CD4-positive, alpha-beta T cell (primary cell): ENCODE measurements at regions of chr1 and their contacts with region 1.

Region 1: DNA sequence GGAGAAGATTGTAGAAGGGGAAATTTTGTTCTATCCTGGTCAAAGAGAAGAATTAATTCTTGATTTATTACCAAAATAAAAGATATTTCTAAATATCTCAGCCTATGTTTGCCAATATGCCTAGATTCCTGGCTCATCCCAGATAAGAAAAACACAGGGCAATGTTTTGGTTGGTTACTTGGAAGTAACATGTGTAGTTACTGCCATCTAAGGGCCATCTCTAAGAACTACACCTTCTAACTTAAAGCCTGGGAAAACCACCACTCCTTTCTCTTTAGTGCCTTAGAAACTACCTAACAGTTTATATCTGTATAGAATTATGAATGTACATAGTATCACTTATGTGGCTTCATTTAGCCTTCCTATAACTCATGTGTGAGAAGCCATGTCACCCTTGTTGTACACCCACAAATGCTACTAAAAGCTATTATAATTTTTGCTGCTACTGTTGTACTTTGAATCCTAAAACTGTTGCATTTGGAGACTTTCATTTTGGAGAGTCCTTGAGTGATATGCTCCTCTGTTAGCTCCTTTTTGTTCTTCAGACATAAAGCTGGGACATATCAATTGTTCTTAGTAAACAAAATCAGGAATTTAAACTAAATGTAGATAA is 4.5 kb downstream of the AIM2 start:
- DNase-seq: peak in 3 of 14 experiments; percentile 67 to 72 (median 72)
- ATAC-seq: no peak
- H3K4me3 ChIP-seq: no peak overlapping the region
- H3K4me3 Mint-ChIP-seq: no peak overlapping the region
- H3K27ac ChIP-seq: no peak overlapping the region
- H3K27ac Mint-ChIP-seq: peak overlapping the region; percentile 0
- H3K4me1 ChIP-seq: peaks cover 27% of the 10 kb centered on the region
- H3K4me1 Mint-ChIP-seq: peaks cover 39% of the 10 kb centered on the region
- H3K27me3 ChIP-seq: no peaks in the 10 kb centered on the region
- H3K27me3 Mint-ChIP-seq: no peaks in the 10 kb centered on the region
- CTCF ChIP-seq: peak; percentile 88

Region 2: GRCh38 chr1:157992031-157992832 is 1079.8 kb before region 1 on chr1:
- CTCF ChIA-PET with region 1: no interaction called
- POLR2A ChIA-PET with region 1: no interaction called
- intact Hi-C with region 1: loop called (anchors 5 to 10 kb)
- DNase-seq: peak in 12 of 14 experiments; percentile 5 to 54 (median 16)
- ATAC-seq: peak; percentile 48
- H3K4me3 ChIP-seq: no peak overlapping the region
- H3K4me3 Mint-ChIP-seq: no peak overlapping the region
- H3K27ac ChIP-seq: no peak overlapping the region
- H3K27ac Mint-ChIP-seq: no peak overlapping the region
- H3K4me1 ChIP-seq: peaks cover 9% of the 10 kb centered on the region
- H3K4me1 Mint-ChIP-seq: no peaks in the 10 kb centered on the region
- H3K27me3 ChIP-seq: peaks cover 21 to 41% of the 10 kb centered on the region in 2 experiments
- H3K27me3 Mint-ChIP-seq: peaks cover 62% of the 10 kb centered on the region
- CTCF ChIP-seq: peak; percentile 65

Region 3: GRCh38 chr1:158203693-158204457 is 868.2 kb before region 1 on chr1:
- CTCF ChIA-PET with region 1: interaction called, 14 read pairs
- POLR2A ChIA-PET with region 1: interaction called, 3 read pairs
- intact Hi-C with region 1: loop called (anchors 1 kb)
- DNase-seq: peak in 4 of 14 experiments; percentile 22 to 71 (median 56)
- ATAC-seq: peak; percentile 54
- H3K4me3 ChIP-seq: no peak overlapping the region
- H3K4me3 Mint-ChIP-seq: no peak overlapping the region
- H3K27ac ChIP-seq: no peak overlapping the region
- H3K27ac Mint-ChIP-seq: no peak overlapping the region
- H3K4me1 ChIP-seq: peaks cover 4% of the 10 kb centered on the region
- H3K4me1 Mint-ChIP-seq: peaks cover 18% of the 10 kb centered on the region
- H3K27me3 ChIP-seq: peaks cover 2 to 6% of the 10 kb centered on the region in 2 experiments
- H3K27me3 Mint-ChIP-seq: peaks cover 17% of the 10 kb centered on the region
- CTCF ChIP-seq: peak; percentile 95

Region 4: GRCh38 chr1:158485455-158485854 is 586.6 kb before region 1 on chr1:
- CTCF ChIA-PET with region 1: no interaction called
- POLR2A ChIA-PET with region 1: no interaction called
- intact Hi-C with region 1: no loop called
- DNase-seq: no peak
- ATAC-seq: no peak
- H3K4me3 ChIP-seq: no peak overlapping the region
- H3K4me3 Mint-ChIP-seq: no peak overlapping the region
- H3K27ac ChIP-seq: no peak overlapping the region
- H3K27ac Mint-ChIP-seq: no peak overlapping the region
- H3K4me1 ChIP-seq: no peaks in the 10 kb centered on the region
- H3K4me1 Mint-ChIP-seq: no peaks in the 10 kb centered on the region
- H3K27me3 ChIP-seq: peaks cover 0 to 5% of the 10 kb centered on the region in 2 experiments
- H3K27me3 Mint-ChIP-seq: peaks cover 18% of the 10 kb centered on the region
- CTCF ChIP-seq: no peak

Region 5: DNA sequence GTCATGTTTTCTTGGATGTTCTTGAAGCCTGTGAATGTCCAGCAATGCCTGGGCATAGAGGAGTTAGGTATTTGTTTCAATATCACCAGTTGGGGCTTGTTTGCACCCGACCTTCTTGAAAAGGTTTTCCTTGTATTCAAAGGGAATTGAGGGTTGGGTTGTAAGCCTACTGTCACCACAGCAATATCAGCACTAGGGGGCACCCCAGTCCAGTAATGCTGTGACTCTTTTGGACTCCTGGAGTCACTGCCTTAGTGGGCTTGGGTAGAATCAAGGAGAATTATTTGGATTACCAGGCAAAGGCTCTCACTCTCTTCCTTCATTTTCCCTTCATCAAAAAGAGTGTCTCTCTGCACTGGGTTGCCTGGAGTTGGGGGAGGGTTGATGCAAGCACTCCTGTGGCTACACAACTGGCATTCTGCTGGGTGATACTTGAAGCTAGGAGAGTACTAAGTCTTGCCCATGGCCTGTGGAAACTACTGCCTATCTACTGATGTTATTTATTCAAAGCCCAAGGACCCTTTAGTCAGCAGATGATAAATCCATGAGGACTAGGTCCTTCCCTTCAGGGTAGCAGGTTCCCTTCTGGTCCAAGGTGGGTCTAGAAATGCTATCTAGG is 565.6 kb before region 1 on chr1:
- CTCF ChIA-PET with region 1: no interaction called
- POLR2A ChIA-PET with region 1: no interaction called
- intact Hi-C with region 1: loop called (anchors 5 kb)
- DNase-seq: peak; percentile 4 to 61 (median 10)
- ATAC-seq: no peak
- H3K4me3 ChIP-seq: no peak overlapping the region
- H3K4me3 Mint-ChIP-seq: no peak overlapping the region
- H3K27ac ChIP-seq: no peak overlapping the region
- H3K27ac Mint-ChIP-seq: no peak overlapping the region
- H3K4me1 ChIP-seq: no peaks in the 10 kb centered on the region
- H3K4me1 Mint-ChIP-seq: no peaks in the 10 kb centered on the region
- H3K27me3 ChIP-seq: peaks cover 4 to 5% of the 10 kb centered on the region in 2 experiments
- H3K27me3 Mint-ChIP-seq: peaks cover 18% of the 10 kb centered on the region
- CTCF ChIP-seq: peak; percentile 22

Region 6: DNA sequence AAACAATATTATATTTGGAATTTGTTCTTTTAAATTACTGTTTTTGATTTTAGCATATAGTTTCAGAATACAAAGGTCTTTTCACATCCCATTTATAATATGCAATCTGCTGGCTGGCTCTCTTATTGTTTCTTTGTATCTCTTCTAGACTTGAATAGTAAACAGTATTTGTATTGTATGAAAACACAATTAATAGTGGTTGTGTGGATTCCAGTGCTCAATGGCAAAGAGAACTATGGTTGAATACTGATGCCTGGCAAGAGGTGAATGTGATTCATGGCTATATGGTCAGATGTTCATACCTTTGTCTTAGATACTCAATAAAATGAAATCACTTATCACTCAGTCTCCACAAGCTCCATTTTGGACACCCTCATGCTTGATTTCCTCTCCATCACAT is 555.1 kb before region 1 on chr1:
- CTCF ChIA-PET with region 1: no interaction called
- POLR2A ChIA-PET with region 1: no interaction called
- intact Hi-C with region 1: no loop called
- DNase-seq: no peak
- ATAC-seq: no peak
- H3K4me3 ChIP-seq: no peak overlapping the region
- H3K4me3 Mint-ChIP-seq: no peak overlapping the region
- H3K27ac ChIP-seq: no peak overlapping the region
- H3K27ac Mint-ChIP-seq: no peak overlapping the region
- H3K4me1 ChIP-seq: no peaks in the 10 kb centered on the region
- H3K4me1 Mint-ChIP-seq: no peaks in the 10 kb centered on the region
- H3K27me3 ChIP-seq: peaks cover 0 to 5% of the 10 kb centered on the region in 2 experiments
- H3K27me3 Mint-ChIP-seq: peaks cover 5% of the 10 kb centered on the region
- CTCF ChIP-seq: no peak

Region 7: GRCh38 chr1:158998781-158999161 is 73.3 kb before region 1 on chr1:
- CTCF ChIA-PET with region 1: interaction called, 4 read pairs
- POLR2A ChIA-PET with region 1: interaction called, 4 read pairs
- intact Hi-C with region 1: loop called in 1 of 2 experiments (anchors 5 kb)
- DNase-seq: peak in 9 of 14 experiments; percentile 21 to 82 (median 40)
- ATAC-seq: peak; percentile 82
- H3K4me3 ChIP-seq: no peak overlapping the region
- H3K4me3 Mint-ChIP-seq: peak overlapping the region; percentile 57
- H3K27ac ChIP-seq: no peak overlapping the region
- H3K27ac Mint-ChIP-seq: peak overlapping the region; percentile 4
- H3K4me1 ChIP-seq: peaks cover 7% of the 10 kb centered on the region
- H3K4me1 Mint-ChIP-seq: peaks cover 32% of the 10 kb centered on the region
- H3K27me3 ChIP-seq: no peaks in the 10 kb centered on the region
- H3K27me3 Mint-ChIP-seq: no peaks in the 10 kb centered on the region
- CTCF ChIP-seq: peak; percentile 93

Region 8: DNA sequence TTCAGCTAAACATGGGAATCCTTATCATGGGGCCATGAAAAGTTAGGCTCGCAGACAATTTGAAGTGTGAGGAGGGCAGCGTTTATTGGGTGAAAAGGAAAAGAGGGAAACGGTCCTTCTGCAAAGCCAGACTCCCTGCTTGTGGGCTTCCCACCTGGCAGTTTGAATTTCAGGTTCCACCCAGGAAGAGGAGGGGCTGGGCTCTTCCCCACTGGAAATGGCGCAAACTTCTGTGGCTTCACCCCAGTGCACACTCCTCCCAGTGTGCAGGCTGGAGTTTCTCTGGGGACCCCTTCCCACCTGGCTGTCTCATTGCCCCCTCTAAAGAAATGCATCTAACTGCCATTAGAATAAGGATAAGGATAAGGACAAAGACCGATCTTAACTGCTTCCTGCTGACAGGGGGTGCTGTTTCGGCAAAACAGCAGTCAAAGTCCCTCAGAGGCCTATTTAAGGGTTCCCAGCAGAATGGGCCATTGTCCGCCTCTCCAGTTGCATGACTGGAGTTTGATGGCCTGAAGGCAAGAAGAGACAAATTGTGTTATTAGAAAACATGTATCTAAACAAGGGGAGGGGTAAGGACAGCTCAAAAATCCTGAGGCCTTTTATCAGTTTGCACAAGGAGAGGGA is 15.9 kb before region 1 on chr1:
- CTCF ChIA-PET with region 1: interaction called, 3 read pairs
- POLR2A ChIA-PET with region 1: interaction called, 11 read pairs
- intact Hi-C with region 1: no loop called
- DNase-seq: peak in 1 of 14 experiments; percentile 12
- ATAC-seq: no peak
- H3K4me3 ChIP-seq: no peak overlapping the region
- H3K4me3 Mint-ChIP-seq: no peak overlapping the region
- H3K27ac ChIP-seq: no peak overlapping the region
- H3K27ac Mint-ChIP-seq: peak overlapping the region; percentile 19
- H3K4me1 ChIP-seq: peaks cover 3% of the 10 kb centered on the region
- H3K4me1 Mint-ChIP-seq: peaks cover 35% of the 10 kb centered on the region
- H3K27me3 ChIP-seq: no peaks in the 10 kb centered on the region
- H3K27me3 Mint-ChIP-seq: no peaks in the 10 kb centered on the region
- CTCF ChIP-seq: no peak

Region 9: DNA sequence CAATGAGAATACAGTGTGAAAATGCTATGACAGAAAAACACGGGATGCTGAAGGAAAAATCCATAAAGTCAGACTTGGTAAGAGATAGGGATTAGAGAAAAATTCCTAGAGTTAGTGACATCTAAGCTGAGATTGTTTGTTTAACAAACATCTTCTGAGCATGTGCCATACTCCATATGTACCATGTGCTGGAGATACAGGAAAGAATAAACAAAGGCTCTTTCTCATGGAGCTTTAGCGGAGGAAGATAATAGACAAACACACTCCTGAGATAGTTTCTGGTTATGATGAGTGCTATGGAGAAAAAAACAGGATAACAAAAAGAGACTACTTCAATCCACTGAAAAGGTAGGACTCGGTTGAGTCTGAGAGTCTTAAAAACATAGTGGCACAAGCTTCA is 26.5 kb after region 1 on chr1:
- CTCF ChIA-PET with region 1: no interaction called
- POLR2A ChIA-PET with region 1: no interaction called
- intact Hi-C with region 1: no loop called
- DNase-seq: no peak
- ATAC-seq: no peak
- H3K4me3 ChIP-seq: no peak overlapping the region
- H3K4me3 Mint-ChIP-seq: no peak overlapping the region
- H3K27ac ChIP-seq: no peak overlapping the region
- H3K27ac Mint-ChIP-seq: no peak overlapping the region
- H3K4me1 ChIP-seq: no peaks in the 10 kb centered on the region
- H3K4me1 Mint-ChIP-seq: no peaks in the 10 kb centered on the region
- H3K27me3 ChIP-seq: no peaks in the 10 kb centered on the region
- H3K27me3 Mint-ChIP-seq: peaks cover 39% of the 10 kb centered on the region
- CTCF ChIP-seq: no peak

Region 10: DNA sequence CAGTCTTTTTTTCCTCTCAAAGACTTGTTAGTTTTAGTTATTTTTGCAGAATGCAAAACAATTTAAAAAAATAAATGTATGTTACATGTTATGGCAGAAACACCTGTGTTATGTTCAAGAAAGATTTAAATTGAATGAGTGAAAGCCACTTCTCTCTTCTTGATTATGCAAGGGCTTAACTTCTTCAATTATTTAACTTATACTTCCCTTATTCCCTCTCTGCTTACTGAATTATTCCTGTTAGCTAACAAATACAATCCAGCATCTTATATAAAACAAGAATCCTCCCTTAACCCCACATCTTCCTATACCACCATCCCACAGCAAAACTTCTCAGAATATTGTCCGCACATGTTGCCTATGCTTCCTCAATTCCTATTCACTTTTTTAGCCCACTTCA is 219.3 kb after region 1 on chr1:
- CTCF ChIA-PET with region 1: no interaction called
- POLR2A ChIA-PET with region 1: no interaction called
- intact Hi-C with region 1: no loop called
- DNase-seq: no peak
- ATAC-seq: no peak
- H3K4me3 ChIP-seq: no peak overlapping the region
- H3K4me3 Mint-ChIP-seq: no peak overlapping the region
- H3K27ac ChIP-seq: no peak overlapping the region
- H3K27ac Mint-ChIP-seq: no peak overlapping the region
- H3K4me1 ChIP-seq: no peaks in the 10 kb centered on the region
- H3K4me1 Mint-ChIP-seq: no peaks in the 10 kb centered on the region
- H3K27me3 ChIP-seq: no peaks in the 10 kb centered on the region
- H3K27me3 Mint-ChIP-seq: no peaks in the 10 kb centered on the region
- CTCF ChIP-seq: no peak